K562 (cell line): ENCODE measurements at regions of chr7 and their contacts with region 1.

Region 1: GRCh38 chr7:135281363-135281949 is 47.8 kb downstream of the STRA8 start:
- DNase-seq: peak; percentile 88 to 93 (median 91)
- ATAC-seq: peak; percentile 99
- H3K4me3 ChIP-seq: no peak overlapping the region
- H3K27ac ChIP-seq: no peak overlapping the region
- H3K4me1 ChIP-seq: peaks cover 0 to 4% of the 10 kb centered on the region in 2 experiments; a peak in 1 of 5 replicates
- H3K27me3 ChIP-seq: peaks cover 12 to 17% of the 10 kb centered on the region in 2 experiments
- CTCF ChIP-seq: peak; percentile 100
- EP300 ChIP-seq: peak; percentile 38
- POLR2A ChIP-seq: no peak
- RAD21 ChIP-seq: peak; percentile 100

Region 2: GRCh38 chr7:135335628-135336139 is 54.2 kb after region 1 on chr7:
- CTCF ChIA-PET with region 1: interaction called, 43 read pairs
- POLR2A ChIA-PET with region 1: no interaction called
- in situ Hi-C with region 1: no loop called
- intact Hi-C with region 1: loop called (anchors 1 kb)
- DNase-seq: peak; percentile 66 to 77 (median 70)
- ATAC-seq: peak; percentile 94
- H3K4me3 ChIP-seq: no peak overlapping the region
- H3K27ac ChIP-seq: no peak overlapping the region
- H3K4me1 ChIP-seq: no peaks in the 10 kb centered on the region
- H3K27me3 ChIP-seq: peaks cover 8 to 27% of the 10 kb centered on the region in 2 experiments; a peak in 4 of 5 replicates
- CTCF ChIP-seq: peak; percentile 60 to 87 (median 70); a peak in 5 of 6 replicates
- EP300 ChIP-seq: no peak
- POLR2A ChIP-seq: no peak
- RAD21 ChIP-seq: peak; percentile 28 to 73; a peak in 3 of 4 replicates

Region 3: DNA sequence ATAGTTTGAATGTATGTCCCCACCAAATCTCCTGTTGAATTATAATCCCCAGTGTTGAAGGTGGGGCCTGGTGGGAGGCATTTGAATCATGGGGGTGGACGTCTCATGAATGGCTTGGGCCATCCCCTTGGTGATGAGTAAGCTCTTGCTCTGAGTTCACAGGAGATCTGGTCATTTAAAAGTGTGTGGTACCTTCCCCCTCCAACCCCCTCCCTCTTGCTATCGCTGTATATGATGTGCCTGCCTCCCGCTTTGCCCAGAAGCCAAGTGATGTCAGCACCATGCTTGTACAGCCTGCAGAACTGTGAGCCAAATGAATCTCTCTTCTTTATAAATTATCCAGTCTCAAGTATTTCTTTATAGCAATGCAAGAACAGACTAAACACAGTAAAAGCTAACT is 125.5 kb after region 1 on chr7:
- CTCF ChIA-PET with region 1: no interaction called
- POLR2A ChIA-PET with region 1: no interaction called
- in situ Hi-C with region 1: no loop called
- intact Hi-C with region 1: loop called (anchors 5 kb)
- DNase-seq: no peak
- ATAC-seq: no peak
- H3K4me3 ChIP-seq: no peak overlapping the region
- H3K27ac ChIP-seq: no peak overlapping the region
- H3K4me1 ChIP-seq: peaks cover 0 to 7% of the 10 kb centered on the region in 2 experiments; a peak in 2 of 5 replicates
- H3K27me3 ChIP-seq: no peaks in the 10 kb centered on the region
- CTCF ChIP-seq: no peak
- EP300 ChIP-seq: no peak
- POLR2A ChIP-seq: no peak
- RAD21 ChIP-seq: no peak

Region 4: GRCh38 chr7:135558337-135558767 is 276.9 kb after region 1 on chr7:
- CTCF ChIA-PET with region 1: interaction called, 37 read pairs
- POLR2A ChIA-PET with region 1: interaction called, 3 read pairs
- in situ Hi-C with region 1: no loop called
- intact Hi-C with region 1: loop called (anchors 1 kb)
- DNase-seq: peak; percentile 80 to 94 (median 86)
- ATAC-seq: peak; percentile 90
- H3K4me3 ChIP-seq: peak overlapping the region; percentile 63
- H3K27ac ChIP-seq: peak overlapping the region; percentile 94
- H3K4me1 ChIP-seq: peaks cover 4 to 8% of the 10 kb centered on the region in 2 experiments
- H3K27me3 ChIP-seq: no peaks in the 10 kb centered on the region; a peak in 1 of 5 replicates
- CTCF ChIP-seq: peak; percentile 87 to 94 (median 89)
- EP300 ChIP-seq: no peak; the same call in 1 of the 2 replicates
- POLR2A ChIP-seq: peak; percentile 56
- RAD21 ChIP-seq: peak; percentile 86 to 93

Region 5: GRCh38 chr7:135650831-135651573 is 369.5 kb after region 1 on chr7:
- CTCF ChIA-PET with region 1: interaction called, 51 read pairs
- POLR2A ChIA-PET with region 1: interaction called, 6 read pairs
- in situ Hi-C with region 1: loop called (anchors 10 kb)
- intact Hi-C with region 1: loop called (anchors 1 kb)
- DNase-seq: peak in 2 of 4 experiments; percentile 70 to 83
- ATAC-seq: peak; percentile 89
- H3K4me3 ChIP-seq: no peak overlapping the region
- H3K27ac ChIP-seq: peak overlapping the region; percentile 38; the same call in 2 of the 3 replicates
- H3K4me1 ChIP-seq: peaks cover 12 to 14% of the 10 kb centered on the region in 2 experiments; a peak in 4 of 5 replicates
- H3K27me3 ChIP-seq: no peaks in the 10 kb centered on the region
- CTCF ChIP-seq: no peak
- EP300 ChIP-seq: peak; percentile 47; the same call in 1 of the 2 replicates
- POLR2A ChIP-seq: no peak
- RAD21 ChIP-seq: no peak

Region 6: GRCh38 chr7:135782377-135782776 is 500.9 kb after region 1 on chr7:
- CTCF ChIA-PET with region 1: no interaction called
- POLR2A ChIA-PET with region 1: no interaction called
- in situ Hi-C with region 1: no loop called
- intact Hi-C with region 1: no loop called
- DNase-seq: no peak
- ATAC-seq: no peak
- H3K4me3 ChIP-seq: no peak overlapping the region
- H3K27ac ChIP-seq: no peak overlapping the region
- H3K4me1 ChIP-seq: no peaks in the 10 kb centered on the region; a peak in 2 of 5 replicates
- H3K27me3 ChIP-seq: peaks cover 28 to 30% of the 10 kb centered on the region in 2 experiments
- CTCF ChIP-seq: no peak
- EP300 ChIP-seq: no peak
- POLR2A ChIP-seq: no peak
- RAD21 ChIP-seq: no peak

Region 7: DNA sequence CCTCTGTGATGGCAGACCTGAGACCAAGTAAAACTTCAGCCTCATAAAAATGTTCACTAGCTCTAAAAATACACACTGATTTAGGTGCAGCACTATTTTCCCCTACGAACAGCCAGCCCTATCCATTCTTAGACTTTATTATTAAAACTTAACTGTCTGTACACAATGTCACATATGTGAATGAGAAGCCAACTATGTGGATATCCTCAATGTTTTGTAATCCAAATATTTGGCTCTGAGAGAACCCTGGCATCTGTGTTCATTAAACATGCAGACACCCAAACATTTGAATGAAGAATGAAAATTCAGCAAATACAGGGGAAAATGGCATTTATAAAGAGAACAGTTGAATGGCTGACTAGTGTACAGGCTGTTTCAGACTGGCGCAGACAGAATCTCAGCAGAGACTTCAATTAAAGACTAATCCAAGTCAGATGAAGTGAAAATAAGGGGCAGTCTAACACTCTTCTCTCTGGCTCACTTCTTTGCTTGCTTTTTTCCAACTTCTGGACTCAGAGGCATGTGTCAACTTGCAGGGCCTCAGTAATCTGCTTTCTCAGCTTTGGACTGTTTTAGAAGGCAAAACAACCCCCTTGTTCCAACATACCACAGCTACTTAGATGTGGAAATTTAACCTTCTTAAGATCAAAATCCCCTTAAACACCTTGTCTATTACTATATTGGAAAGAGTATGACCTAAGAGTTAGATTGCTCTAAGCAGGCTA is 514.6 kb after region 1 on chr7:
- CTCF ChIA-PET with region 1: interaction called, 5 read pairs
- POLR2A ChIA-PET with region 1: no interaction called
- in situ Hi-C with region 1: loop called (anchors 5 kb)
- intact Hi-C with region 1: loop called (anchors 2 kb)
- DNase-seq: no peak
- ATAC-seq: no peak
- H3K4me3 ChIP-seq: no peak overlapping the region
- H3K27ac ChIP-seq: no peak overlapping the region
- H3K4me1 ChIP-seq: peaks cover 3 to 5% of the 10 kb centered on the region in 2 experiments; a peak in 3 of 5 replicates
- H3K27me3 ChIP-seq: peaks cover 24 to 43% of the 10 kb centered on the region in 2 experiments; a peak in 4 of 5 replicates
- CTCF ChIP-seq: no peak
- EP300 ChIP-seq: no peak
- POLR2A ChIP-seq: no peak
- RAD21 ChIP-seq: no peak